ENCODE measurements at regions of chr12 and their contacts with region 1.

Region 1: GRCh38 chr12:123232807-123233543 is at the starts of genes MPHOSPH9 and MTRFR:
- DNase-seq: peak; percentile 99
- ATAC-seq: peak; percentile 99
- total RNA-seq, gene MPHOSPH9: 21.3 TPM
- total RNA-seq, gene MTRFR: 8.1 TPM

Region 2: GRCh38 chr12:122860346-122861090 is 372.5 kb before region 1 on chr12:
- intact Hi-C with region 1: loop called (anchors 10 kb)
- DNase-seq: peak; percentile 90
- ATAC-seq: peak; percentile 63

Region 3: GRCh38 chr12:122980183-122981046 is 252.6 kb before region 1 on chr12 and contains the start of gene ARL6IP4:
- intact Hi-C with region 1: loop called (anchors 5 kb)
- DNase-seq: peak; percentile 88
- ATAC-seq: peak; percentile 76
- total RNA-seq, gene ARL6IP4: 158 TPM

Region 4: GRCh38 chr12:123043536-123044001 is 189.4 kb before region 1 on chr12:
- intact Hi-C with region 1: loop called (anchors 5 kb)
- DNase-seq: peak; percentile 90
- ATAC-seq: peak; percentile 94

Region 5: DNA sequence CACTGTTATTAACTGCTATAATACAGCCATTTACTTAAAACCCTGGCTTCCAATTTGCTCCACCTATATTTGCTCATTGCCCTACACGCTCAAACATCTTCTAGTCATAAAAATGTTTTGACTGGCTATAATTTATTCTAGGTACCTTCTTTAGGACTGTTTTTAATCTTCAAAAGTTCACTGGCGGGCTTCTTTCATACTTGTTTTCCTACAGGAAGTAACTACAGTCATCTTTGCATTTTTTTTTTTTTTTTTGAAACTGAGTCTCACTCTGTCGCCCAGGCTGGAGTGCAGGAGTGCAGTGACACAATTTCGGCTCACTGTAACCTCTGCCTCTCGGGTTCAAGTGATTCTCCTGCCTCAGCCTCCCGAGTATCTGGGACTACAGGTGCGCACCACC is 32.6 kb before region 1 on chr12:
- intact Hi-C with region 1: no loop called
- DNase-seq: no peak
- ATAC-seq: no peak